ENCODE measurements at regions of chr9 and their contacts with region 1.

Region 1: DNA sequence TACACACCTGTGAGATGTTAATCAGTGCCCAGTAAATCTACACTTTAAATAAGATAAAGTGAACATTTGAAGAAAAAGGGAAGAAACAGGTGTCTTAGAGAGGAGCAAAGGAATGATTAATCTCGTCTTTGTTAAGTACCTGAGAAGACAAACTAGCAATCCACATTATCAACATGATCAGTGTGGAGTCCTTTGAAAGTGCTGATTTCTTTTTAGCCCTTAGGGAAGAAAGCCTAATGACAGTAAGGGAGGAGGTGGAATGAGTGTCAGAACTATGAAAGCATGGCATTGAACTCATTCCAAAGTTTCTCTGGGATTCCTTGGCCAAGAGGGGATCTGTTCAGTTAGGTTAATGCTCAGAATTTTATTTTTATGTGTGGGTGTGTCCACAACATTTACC is 1109.0 kb upstream of the ACO1 start:
- DNase-seq: no peak
- H3K4me3 ChIP-seq: no peak overlapping the region
- H3K27ac ChIP-seq: no peak overlapping the region
- H3K4me1 ChIP-seq: no peaks in the 10 kb centered on the region
- H3K27me3 ChIP-seq: no peaks in the 10 kb centered on the region
- CTCF ChIP-seq: no peak
- EP300 ChIP-seq: no peak
- POLR2A ChIP-seq: no peak

Region 2: GRCh38 chr9:30140407-30140806 is 1135.0 kb before region 1 on chr9:
- intact Hi-C with region 1: no loop called
- DNase-seq: no peak
- H3K4me3 ChIP-seq: no peak overlapping the region
- H3K27ac ChIP-seq: no peak overlapping the region
- H3K4me1 ChIP-seq: no peaks in the 10 kb centered on the region
- H3K27me3 ChIP-seq: no peaks in the 10 kb centered on the region
- CTCF ChIP-seq: no peak
- EP300 ChIP-seq: no peak
- POLR2A ChIP-seq: no peak

Region 3: GRCh38 chr9:30349526-30350513 is 925.6 kb before region 1 on chr9:
- intact Hi-C with region 1: loop called in 1 of 4 experiments (anchors 5 kb)
- DNase-seq: no peak
- H3K4me3 ChIP-seq: no peak overlapping the region
- H3K27ac ChIP-seq: no peak overlapping the region
- H3K4me1 ChIP-seq: no peaks in the 10 kb centered on the region
- H3K27me3 ChIP-seq: no peaks in the 10 kb centered on the region
- CTCF ChIP-seq: no peak
- EP300 ChIP-seq: no peak
- POLR2A ChIP-seq: no peak